ENCODE measurements at regions of chr17 and their contacts with region 1.

Region 1: DNA sequence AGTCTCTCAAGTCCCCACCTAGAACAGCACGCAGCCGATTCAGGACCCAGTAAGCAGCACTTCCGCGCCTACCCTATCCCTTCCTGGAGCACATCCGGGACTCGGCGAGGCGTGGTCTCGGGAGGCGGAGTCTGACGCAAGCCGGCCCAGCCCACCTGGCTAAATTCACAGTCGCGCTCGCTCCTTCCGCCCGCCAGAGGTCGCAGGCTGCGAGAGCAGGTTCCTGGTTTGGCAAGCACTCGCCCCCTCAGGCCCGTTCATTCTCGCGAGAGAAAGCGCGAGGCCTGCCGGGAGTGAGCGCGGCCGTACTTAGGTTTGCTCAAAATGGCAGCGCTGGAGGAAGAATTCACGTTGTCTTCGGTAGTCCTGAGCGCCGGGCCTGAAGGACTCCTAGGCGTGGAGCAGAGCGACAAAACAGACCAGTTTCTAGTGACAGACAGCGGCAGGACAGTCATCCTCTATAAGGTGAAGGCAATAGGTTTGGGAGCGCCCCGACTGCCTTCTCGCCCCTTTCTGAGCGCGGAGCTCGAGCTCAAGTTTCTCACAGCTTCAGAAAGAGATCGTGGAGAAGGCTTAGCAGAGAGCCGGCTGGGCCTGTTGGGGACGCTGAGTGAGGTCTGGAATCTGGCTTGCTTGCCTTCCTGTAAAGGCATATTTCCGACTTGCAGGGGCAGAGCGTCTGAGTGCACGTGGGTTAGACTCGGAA is at the start of gene NOL11:
- DNase-seq: peak; percentile 99
- H3K4me3 ChIP-seq: peak within 1 kb of the TSS; percentile 69 to 89
- H3K27ac ChIP-seq: peak within 1 kb of the TSS; percentile 84
- H3K4me1 ChIP-seq: no peaks in the 10 kb centered on the region
- H3K27me3 ChIP-seq: no peaks in the 10 kb centered on the region
- CTCF ChIP-seq: peak; percentile 89 to 100 (median 98)
- POLR2A ChIP-seq: peak; percentile 82
- total RNA-seq, gene NOL11: 25.0 to 33.8 TPM

Region 2: DNA sequence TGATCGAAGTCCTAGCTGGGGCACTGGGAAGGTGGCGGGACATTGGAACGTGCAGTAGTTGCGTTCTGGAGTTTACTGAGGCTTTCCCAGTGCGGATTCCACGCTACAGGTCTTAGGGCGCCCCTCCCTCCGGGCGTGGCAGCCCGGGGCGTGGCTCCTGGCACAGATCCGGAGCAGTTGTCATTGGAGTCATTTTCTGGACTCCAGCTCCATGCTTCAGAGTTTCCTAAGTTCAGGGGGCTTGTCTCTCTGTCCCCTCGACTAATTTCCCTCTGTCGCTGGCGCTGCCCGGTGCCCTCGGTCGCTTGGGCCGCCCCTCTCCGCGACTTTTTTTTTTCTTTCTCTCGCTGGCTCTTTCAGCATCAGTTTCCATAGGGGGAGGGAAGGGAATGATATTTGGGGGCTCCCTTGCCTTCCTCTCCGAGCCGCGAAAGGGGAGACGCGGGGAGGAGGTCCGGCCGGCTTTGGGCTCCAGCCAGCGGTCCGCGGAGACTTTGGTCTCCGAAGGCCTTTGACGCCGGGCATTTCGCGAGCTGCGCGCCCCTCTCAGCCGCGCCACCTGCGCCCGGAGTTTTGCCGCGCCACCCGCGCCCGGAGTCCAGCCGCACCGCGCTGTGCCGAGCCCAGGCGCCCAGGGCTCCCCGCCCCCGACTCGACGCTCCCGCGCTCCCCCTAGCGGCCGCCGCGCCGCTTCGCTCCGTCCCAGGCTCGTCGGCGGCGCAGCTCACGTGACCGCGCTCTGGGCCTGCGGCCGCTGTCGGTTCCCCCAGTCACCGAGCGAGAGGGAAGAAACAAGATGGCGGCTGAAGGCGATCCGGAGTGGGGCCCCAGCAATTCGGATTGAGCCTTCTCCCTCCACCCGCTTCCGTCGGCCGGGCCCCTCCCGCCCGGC is 107.2 kb after region 1 on chr17 and contains the start of gene BPTF:
- intact Hi-C with region 1: loop called (anchors 5 kb)
- DNase-seq: peak; percentile 87
- H3K4me3 ChIP-seq: peak within 1 kb of the TSS; percentile 81 to 86
- H3K27ac ChIP-seq: peak within 1 kb of the TSS; percentile 96 to 97
- H3K4me1 ChIP-seq: no peaks in the 10 kb centered on the region
- H3K27me3 ChIP-seq: no peaks in the 10 kb centered on the region
- CTCF ChIP-seq: peak; percentile 91 to 99 (median 96)
- POLR2A ChIP-seq: peak; percentile 77
- total RNA-seq, gene BPTF: 70.5 to 138 TPM

Measured in prostate gland (tissue), 2 donors.